Ovary (tissue), 10 donors: ENCODE measurements at regions of chr10 and their contacts with region 1.

Region 1: DNA sequence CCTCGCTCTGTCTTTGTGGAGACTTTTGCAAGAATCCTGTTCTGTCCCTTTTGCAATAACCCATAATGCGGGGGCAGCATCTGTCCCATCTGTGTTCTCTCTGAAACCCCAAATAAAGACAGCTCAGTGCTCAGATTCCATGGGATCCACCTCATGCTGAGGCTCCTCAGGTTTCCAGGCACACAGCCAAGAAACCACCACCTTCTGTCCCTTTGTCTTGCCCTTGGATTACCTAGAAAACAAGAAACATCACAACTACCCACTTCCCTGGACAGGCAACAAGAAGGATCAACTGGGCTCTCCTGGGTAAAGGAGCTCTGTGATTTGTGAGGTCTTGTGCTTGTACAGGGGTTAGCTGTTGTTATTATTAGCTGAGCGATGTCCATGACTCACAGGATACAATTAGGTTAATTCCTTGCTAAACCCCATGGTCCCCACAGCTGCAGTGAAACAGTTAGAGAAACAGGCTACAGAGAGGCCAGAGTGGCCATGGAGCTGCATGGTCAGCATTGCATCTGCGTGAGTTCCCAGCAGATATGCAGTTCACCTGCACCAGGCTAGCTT is 50.2 kb downstream of the CXCL12 start:
- DNase-seq: no peak
- H3K4me3 ChIP-seq: no peak overlapping the region
- H3K27ac ChIP-seq: no peak overlapping the region
- H3K4me1 ChIP-seq: no peaks in the 10 kb centered on the region
- H3K27me3 ChIP-seq: no peaks in the 10 kb centered on the region
- CTCF ChIP-seq: no peak
- EP300 ChIP-seq: no peak
- POLR2A ChIP-seq: no peak

Region 2: GRCh38 chr10:43284341-43284910 is 1050.3 kb before region 1 on chr10:
- intact Hi-C with region 1: loop called in 1 of 4 experiments (anchors 5 kb)
- DNase-seq: no peak
- H3K4me3 ChIP-seq: no peak overlapping the region
- H3K27ac ChIP-seq: no peak overlapping the region
- H3K4me1 ChIP-seq: no peaks in the 10 kb centered on the region
- H3K27me3 ChIP-seq: no peaks in the 10 kb centered on the region
- CTCF ChIP-seq: no peak
- EP300 ChIP-seq: no peak
- POLR2A ChIP-seq: no peak

Region 3: GRCh38 chr10:44366936-44367630 is 32.4 kb after region 1 on chr10:
- intact Hi-C with region 1: no loop called
- DNase-seq: no peak
- H3K4me3 ChIP-seq: no peak overlapping the region
- H3K27ac ChIP-seq: no peak overlapping the region
- H3K4me1 ChIP-seq: no peaks in the 10 kb centered on the region
- H3K27me3 ChIP-seq: no peaks in the 10 kb centered on the region
- CTCF ChIP-seq: no peak
- EP300 ChIP-seq: no peak
- POLR2A ChIP-seq: no peak

Region 4: DNA sequence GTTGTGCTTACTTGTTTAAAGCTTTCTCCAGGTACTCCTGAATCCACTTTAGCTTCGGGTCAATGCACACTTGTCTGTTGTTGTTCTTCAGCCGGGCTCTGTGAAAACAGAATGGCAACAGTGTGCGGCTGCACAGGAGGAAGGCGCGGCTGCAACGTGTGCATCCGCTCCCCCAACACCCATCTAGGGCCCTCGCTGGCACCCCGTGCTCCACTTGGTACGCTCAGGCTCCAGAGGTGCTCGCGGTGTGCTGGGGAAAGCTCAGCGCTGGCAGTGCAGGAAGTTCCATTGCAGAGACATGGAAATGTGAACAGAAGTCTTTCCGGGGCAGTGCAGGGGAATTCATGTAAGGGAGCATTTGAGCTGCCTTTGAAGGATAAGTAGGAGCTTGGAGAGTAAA is 43.9 kb after region 1 on chr10:
- intact Hi-C with region 1: loop called in 1 of 4 experiments (anchors 1 kb)
- DNase-seq: no peak
- H3K4me3 ChIP-seq: no peak overlapping the region
- H3K27ac ChIP-seq: no peak overlapping the region
- H3K4me1 ChIP-seq: peaks cover 6% of the 10 kb centered on the region
- H3K27me3 ChIP-seq: no peaks in the 10 kb centered on the region
- CTCF ChIP-seq: no peak
- EP300 ChIP-seq: no peak
- POLR2A ChIP-seq: no peak